Activated T-helper 2 cell treated with anti-CD3 and anti-CD28 coated beads, Interferon-gamma antibody, Interleukin-2, Interleukin-4, amounts not matched to agents 10 μg/mL and 5 μg/mL and 100 μg/mL, durations not matched to agents 14 hours and 24 hours and 36 hours (primary cell): ENCODE measurements at regions of chr3 and their contacts with region 1.

Region 1: GRCh38 chr3:19885468-19885867 is 48.5 kb downstream of the EFHB start:
- DNase-seq: no peak
- H3K4me3 Mint-ChIP-seq: no peak overlapping the region
- H3K27ac Mint-ChIP-seq: no peak overlapping the region
- H3K4me1 Mint-ChIP-seq: no peaks in the 10 kb centered on the region
- H3K27me3 Mint-ChIP-seq: peaks cover 7% of the 10 kb centered on the region

Region 2: DNA sequence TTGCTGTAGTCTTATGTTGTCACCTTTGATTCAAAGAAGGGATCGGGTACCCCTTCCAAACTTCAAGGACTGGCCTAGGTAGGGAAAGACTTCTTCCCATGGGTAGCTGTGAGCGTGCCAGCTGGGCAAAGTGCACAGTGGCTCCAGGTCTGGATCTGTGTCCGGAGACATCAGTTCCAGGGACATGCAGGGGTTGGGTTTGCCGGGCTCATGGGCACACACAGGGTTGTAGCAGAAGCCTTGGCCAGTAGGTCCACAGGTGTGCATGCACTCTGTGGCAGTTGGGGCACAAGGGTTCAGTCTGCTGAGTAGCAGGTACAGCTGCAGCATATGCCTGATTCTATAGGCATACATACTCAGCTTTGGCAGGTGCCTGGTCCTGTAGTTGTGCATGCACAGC is 62.7 kb before region 1 on chr3:
- intact Hi-C with region 1: no loop called
- DNase-seq: no peak
- H3K4me3 Mint-ChIP-seq: no peak overlapping the region
- H3K27ac Mint-ChIP-seq: no peak overlapping the region
- H3K4me1 Mint-ChIP-seq: no peaks in the 10 kb centered on the region
- H3K27me3 Mint-ChIP-seq: no peaks in the 10 kb centered on the region

Region 3: DNA sequence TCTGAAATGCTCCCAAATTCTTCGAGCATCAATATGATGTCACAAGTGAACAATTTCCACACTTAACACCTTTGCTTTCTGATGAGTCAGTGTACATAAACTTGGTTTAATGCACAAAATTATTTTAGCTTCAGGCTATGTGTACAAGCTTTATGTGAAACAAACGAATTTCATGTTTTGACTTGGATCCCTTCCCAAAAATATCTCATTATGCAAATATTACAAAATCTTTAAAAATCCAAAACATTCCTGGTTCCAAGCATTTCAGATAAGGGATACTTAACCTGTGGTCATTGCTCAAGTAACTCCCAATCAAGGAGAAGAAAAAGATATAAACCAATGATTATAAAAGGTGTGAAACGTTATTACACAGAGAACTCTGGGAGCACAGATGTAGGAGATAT is 86.6 kb after region 1 on chr3:
- intact Hi-C with region 1: loop called (anchors 10 kb)
- DNase-seq: no peak
- H3K4me3 Mint-ChIP-seq: no peak overlapping the region
- H3K27ac Mint-ChIP-seq: no peak overlapping the region
- H3K4me1 Mint-ChIP-seq: peaks cover 5% of the 10 kb centered on the region
- H3K27me3 Mint-ChIP-seq: no peaks in the 10 kb centered on the region